ENCODE measurements at regions of chr6 and their contacts with region 1.

Region 1: GRCh38 chr6:89145787-89146646 is at the start of gene PM20D2:
- DNase-seq: peak; percentile 79
- ATAC-seq: peak; percentile 70
- H3K4me3 Mint-ChIP-seq: peak within 1 kb of the TSS; percentile 80
- H3K27ac Mint-ChIP-seq: peak within 1 kb of the TSS; percentile 97
- H3K4me1 Mint-ChIP-seq: peaks cover 38% of the 10 kb centered on the region
- H3K27me3 Mint-ChIP-seq: no peaks in the 10 kb centered on the region
- total RNA-seq, gene PM20D2: 14.1 to 17.4 TPM

Region 2: DNA sequence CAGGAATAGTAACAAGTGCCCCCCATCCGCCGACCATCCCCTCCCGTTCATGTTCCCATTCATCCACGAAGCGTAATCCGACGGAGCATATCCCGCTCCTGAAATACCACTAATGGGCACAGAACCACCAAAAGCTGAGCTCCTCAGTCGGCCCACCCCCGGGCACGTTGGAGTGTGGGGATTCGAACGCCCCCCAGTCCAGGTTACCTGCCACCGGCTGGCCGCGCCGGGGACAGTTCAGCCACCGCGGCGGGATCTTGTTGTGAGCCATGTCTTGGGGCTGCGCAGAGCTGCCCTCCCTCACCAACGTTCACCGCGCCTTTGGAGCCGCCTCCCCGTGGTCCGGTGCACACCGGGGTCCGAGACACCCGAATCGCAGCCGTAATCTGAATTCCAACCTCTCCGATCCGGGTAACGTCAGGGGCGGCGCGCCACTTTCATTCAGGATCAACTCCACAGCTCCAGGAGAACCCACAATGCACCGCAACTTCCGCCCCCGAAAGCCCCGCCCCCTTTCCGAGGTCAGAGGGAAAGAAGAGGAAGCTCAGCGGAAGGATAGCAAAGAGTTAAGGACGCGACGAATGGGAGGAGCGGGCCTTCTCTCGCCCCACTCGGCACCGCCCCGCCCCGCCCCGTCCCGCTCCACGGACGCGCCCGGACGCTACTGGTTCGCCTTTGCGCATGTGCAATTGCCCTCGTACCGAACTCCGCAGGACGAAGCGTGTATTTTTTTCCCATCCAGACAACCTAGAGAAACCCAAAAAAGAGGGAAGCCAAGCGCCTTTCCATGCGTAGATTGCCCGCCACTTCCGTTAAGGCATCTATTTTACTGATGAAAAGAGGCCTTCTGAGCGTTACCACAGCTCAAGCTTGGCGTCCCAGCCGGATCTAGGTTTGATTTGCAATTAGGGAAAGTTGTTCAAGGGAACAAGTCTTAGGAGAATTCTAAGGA is 182.6 kb before region 1 on chr6 and contains the start of gene RNGTT:
- CTCF ChIA-PET with region 1: interaction called, 3 read pairs
- POLR2A ChIA-PET with region 1: interaction called, 3 read pairs
- intact Hi-C with region 1: loop called in 1 of 2 experiments (anchors 1 kb)
- DNase-seq: peak; percentile 99
- ATAC-seq: peak; percentile 100
- H3K4me3 Mint-ChIP-seq: peak within 1 kb of the TSS; percentile 99
- H3K27ac Mint-ChIP-seq: peak within 1 kb of the TSS; percentile 93
- H3K4me1 Mint-ChIP-seq: peaks cover 45% of the 10 kb centered on the region
- H3K27me3 Mint-ChIP-seq: no peaks in the 10 kb centered on the region
- total RNA-seq, gene RNGTT: 17.5 to 21.5 TPM

Region 3: DNA sequence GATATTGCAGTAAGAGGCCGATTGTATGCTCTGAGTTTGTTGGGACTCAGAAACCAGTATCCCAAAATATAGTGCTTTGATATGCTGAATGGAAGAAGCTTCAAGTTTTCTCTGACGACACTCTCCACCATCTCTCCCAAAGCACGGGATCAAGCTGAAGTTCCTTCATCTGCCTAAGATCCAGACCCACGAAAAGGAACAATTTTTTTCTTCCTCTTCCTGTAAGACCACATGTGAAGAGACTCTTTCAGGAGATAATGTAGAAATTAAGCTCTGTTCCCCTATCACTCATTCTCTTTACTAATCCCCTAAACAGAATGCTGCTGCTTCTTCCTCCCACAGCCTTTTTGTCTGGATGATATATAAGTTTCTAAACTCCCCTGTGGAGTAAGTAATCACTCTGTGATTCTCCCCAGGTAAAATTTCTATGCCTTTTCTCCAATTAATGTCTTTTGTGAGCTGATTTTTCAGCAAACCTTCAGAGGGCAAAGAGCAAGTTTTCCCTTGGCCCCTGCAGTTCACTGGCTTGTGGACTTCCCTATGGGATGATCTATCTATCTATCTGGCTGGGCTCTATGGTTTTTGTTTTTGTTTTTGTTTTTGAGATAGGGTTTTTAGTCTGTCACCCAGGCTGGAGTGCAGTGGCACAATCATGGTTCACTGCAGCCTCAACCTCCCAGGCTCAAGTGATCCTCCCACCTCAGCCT is 78.9 kb before region 1 on chr6:
- CTCF ChIA-PET with region 1: no interaction called
- POLR2A ChIA-PET with region 1: no interaction called
- intact Hi-C with region 1: no loop called
- DNase-seq: no peak
- ATAC-seq: no peak
- H3K4me3 Mint-ChIP-seq: no peak overlapping the region
- H3K27ac Mint-ChIP-seq: no peak overlapping the region
- H3K4me1 Mint-ChIP-seq: no peaks in the 10 kb centered on the region
- H3K27me3 Mint-ChIP-seq: no peaks in the 10 kb centered on the region

Region 4: DNA sequence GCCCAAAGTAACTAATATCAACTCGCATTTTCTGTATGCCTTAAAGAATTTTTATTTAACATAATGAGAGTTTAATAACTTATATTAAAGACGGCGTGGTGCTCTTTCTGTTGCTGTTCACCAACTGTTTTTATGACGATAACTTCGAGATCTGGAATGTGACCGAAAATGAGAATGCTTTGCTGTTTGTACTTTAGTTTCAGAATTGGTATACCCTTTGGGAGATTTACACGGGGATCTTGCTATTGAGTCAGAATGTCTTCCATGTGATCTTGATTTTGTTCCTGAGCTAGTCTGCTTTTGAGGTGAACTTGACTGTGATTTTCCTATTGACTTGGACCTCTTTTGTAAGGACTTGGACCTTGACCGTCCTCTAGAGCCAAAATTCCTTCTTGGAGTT is 47.6 kb before region 1 on chr6:
- CTCF ChIA-PET with region 1: interaction called, 5 read pairs
- POLR2A ChIA-PET with region 1: interaction called, 3 read pairs
- intact Hi-C with region 1: loop called in 1 of 2 experiments (anchors 5 kb)
- DNase-seq: no peak
- ATAC-seq: peak; percentile 86
- H3K4me3 Mint-ChIP-seq: no peak overlapping the region
- H3K27ac Mint-ChIP-seq: no peak overlapping the region
- H3K4me1 Mint-ChIP-seq: peaks cover 9% of the 10 kb centered on the region
- H3K27me3 Mint-ChIP-seq: no peaks in the 10 kb centered on the region

Region 5: GRCh38 chr6:89161326-89162046 is 15.5 kb after region 1 on chr6:
- CTCF ChIA-PET with region 1: interaction called, 13 read pairs
- POLR2A ChIA-PET with region 1: no interaction called
- intact Hi-C with region 1: no loop called
- DNase-seq: no peak
- ATAC-seq: no peak
- H3K4me3 Mint-ChIP-seq: no peak overlapping the region
- H3K27ac Mint-ChIP-seq: no peak overlapping the region
- H3K4me1 Mint-ChIP-seq: no peaks in the 10 kb centered on the region
- H3K27me3 Mint-ChIP-seq: no peaks in the 10 kb centered on the region

Region 6: DNA sequence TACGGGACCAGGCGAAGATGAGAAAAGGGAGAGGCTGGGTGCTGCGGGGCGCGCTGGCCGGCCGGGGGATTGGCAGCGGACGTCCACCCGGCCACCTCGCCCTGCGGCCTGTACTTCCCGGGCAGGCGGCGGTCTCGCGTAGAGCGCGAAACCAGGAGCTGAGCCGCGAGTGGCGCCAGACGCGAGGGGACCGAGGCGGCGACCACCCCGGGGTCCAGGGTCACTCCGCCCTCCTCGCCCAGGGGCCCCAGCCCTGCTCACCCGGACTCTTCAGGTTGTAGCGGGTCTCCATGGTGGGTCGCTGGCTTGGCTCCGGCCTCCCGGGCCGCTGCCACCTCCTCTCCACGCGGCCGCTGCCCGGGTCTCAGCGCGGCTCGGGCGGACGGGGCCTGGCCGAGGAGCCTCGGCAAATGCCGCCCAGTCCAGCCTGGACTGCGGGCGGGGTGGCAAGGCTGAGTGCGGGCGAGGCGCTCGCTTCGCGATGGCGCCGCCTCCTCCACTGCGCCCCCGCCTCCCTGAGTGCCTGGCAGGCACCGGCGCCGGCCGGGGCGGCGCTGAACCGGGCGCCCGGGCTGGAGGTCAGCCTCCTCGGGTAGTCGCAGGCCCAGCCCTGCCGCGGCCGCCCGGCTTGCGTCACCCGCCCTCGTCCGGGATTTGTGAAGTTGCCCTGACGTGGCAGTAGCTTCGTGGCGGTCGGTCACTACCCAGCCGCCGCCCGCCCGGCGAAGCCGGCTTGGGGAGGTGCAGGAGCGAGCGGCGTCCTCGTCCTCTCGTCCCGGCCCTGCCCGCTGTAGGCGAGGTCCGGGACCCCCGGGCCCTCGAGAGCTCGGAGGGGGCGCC is 206.5 kb after region 1 on chr6 and contains the start of gene UBE2J1:
- CTCF ChIA-PET with region 1: no interaction called
- POLR2A ChIA-PET with region 1: no interaction called
- intact Hi-C with region 1: loop called (anchors 2 to 5 kb)
- DNase-seq: peak; percentile 85
- ATAC-seq: peak; percentile 84
- H3K4me3 Mint-ChIP-seq: peak within 1 kb of the TSS; percentile 91
- H3K27ac Mint-ChIP-seq: peak within 1 kb of the TSS; percentile 97
- H3K4me1 Mint-ChIP-seq: peaks cover 74% of the 10 kb centered on the region
- H3K27me3 Mint-ChIP-seq: no peaks in the 10 kb centered on the region
- total RNA-seq, gene UBE2J1: 18.7 to 21.7 TPM

Region 7: GRCh38 chr6:89895276-89895874 is 749.4 kb after region 1 on chr6:
- CTCF ChIA-PET with region 1: no interaction called
- POLR2A ChIA-PET with region 1: no interaction called
- intact Hi-C with region 1: no loop called
- DNase-seq: peak; percentile 26
- ATAC-seq: no peak
- H3K4me3 Mint-ChIP-seq: no peak overlapping the region
- H3K27ac Mint-ChIP-seq: no peak overlapping the region
- H3K4me1 Mint-ChIP-seq: peaks cover 5% of the 10 kb centered on the region
- H3K27me3 Mint-ChIP-seq: peaks cover 25% of the 10 kb centered on the region

Region 8: DNA sequence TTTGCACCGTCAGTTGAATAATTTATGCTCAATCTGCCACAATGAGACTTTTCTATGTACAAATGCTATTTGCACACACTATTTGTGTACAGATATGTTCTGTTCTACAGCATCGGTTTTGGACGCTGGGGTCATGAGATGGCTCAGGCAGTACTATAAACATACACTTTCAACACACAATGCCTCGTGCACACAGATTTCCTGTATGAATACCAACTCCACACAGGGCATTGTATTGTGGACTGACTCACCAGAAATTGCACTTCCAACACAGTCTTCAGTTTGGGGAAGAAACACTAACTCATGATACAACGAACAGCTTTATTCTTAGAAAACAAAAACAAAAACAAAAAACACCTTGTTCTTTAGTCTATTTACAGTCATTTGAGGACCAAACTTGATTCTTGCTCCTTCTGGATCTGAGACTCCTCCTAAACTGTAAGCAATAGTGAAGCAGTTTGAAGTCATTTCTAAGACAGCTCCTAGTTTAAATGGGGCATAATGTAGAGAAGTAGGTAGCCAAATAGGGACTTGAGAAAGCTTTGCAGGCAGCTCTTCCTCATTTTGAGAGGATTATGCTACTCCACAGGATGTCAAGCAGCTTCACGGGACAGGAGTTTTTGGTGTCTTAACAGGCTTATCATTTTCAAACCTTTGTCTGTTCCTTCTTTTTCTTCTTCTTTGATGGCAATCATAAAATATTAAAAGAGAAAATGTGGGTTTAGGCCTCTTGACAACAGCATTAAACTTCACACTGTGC is 782.0 kb after region 1 on chr6:
- CTCF ChIA-PET with region 1: no interaction called
- POLR2A ChIA-PET with region 1: no interaction called
- intact Hi-C with region 1: no loop called
- DNase-seq: no peak
- ATAC-seq: no peak
- H3K4me3 Mint-ChIP-seq: no peak overlapping the region
- H3K27ac Mint-ChIP-seq: peak overlapping the region; percentile 71
- H3K4me1 Mint-ChIP-seq: peaks cover 56% of the 10 kb centered on the region
- H3K27me3 Mint-ChIP-seq: no peaks in the 10 kb centered on the region